ENCODE measurements at regions of chr11 and their contacts with region 1.

Region 1: DNA sequence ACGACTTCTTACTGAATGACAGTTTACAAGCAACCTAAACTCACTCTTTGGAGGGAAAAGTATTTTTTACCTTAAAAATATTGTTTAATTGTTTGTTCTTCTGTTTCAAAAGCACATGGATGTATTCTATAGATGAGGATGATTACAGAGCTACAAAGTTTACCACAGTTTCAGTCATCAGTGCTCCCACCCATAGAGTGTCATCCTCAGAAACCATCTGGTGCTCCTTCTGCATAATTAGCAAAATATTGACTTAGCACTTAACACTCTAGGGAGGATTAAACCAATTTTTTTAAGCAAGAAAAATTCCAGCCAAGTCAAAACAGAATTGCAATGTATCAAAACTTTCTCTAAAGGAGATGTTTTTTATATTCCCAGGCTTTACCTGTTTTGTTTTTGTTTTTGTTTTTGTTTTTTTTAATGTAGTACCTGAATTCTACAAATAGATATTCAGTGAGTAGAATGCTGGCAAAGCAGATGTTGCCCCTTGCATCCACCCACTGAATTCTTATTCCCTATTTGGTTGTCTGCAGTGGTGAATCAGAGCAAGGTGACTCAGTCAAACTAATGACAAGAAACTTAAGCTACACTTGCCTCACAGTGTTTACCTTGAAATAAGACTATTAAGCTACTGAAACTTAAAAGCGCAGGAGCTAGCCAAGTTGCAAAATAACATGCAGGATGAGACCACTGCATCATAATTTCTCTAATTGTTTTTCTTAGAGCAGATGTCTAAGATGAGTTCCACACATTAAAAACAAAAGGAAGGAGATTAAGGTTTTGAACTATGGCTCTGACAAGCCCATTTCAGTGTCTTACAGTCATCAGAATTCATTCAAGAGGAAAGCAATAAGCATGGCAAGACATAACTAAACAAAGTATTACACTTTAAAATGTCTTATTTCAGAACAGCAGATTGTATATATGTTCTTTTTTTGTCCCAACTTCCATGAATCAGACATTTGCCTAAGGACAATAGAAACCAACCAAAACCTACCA is 155.1 kb upstream of the SOX6 start:
- DNase-seq: no peak
- H3K4me3 Mint-ChIP-seq: no peak overlapping the region
- H3K27ac Mint-ChIP-seq: no peak overlapping the region
- H3K4me1 Mint-ChIP-seq: peaks cover 2% of the 10 kb centered on the region
- H3K27me3 Mint-ChIP-seq: no peaks in the 10 kb centered on the region

Region 2: GRCh38 chr11:15800111-15800800 is 711.2 kb before region 1 on chr11:
- CTCF ChIA-PET with region 1: no interaction called
- POLR2A ChIA-PET with region 1: no interaction called
- intact Hi-C with region 1: loop called (anchors 2 kb)
- DNase-seq: peak; percentile 43
- H3K4me3 Mint-ChIP-seq: no peak overlapping the region
- H3K27ac Mint-ChIP-seq: peak overlapping the region; percentile 88
- H3K4me1 Mint-ChIP-seq: peaks cover 24% of the 10 kb centered on the region
- H3K27me3 Mint-ChIP-seq: no peaks in the 10 kb centered on the region